CD8-positive, alpha-beta T cell (primary cell): ENCODE measurements at regions of chr17 and their contacts with region 1.

Region 1: GRCh38 chr17:43483674-43484372 is at the start of gene DHX8:
- DNase-seq: peak; percentile 97 to 100 (median 99)
- ATAC-seq: peak; percentile 98
- H3K4me3 ChIP-seq: peak within 1 kb of the TSS; percentile 94 to 99
- H3K4me3 Mint-ChIP-seq: peak within 1 kb of the TSS; percentile 100
- H3K27ac ChIP-seq: peak within 1 kb of the TSS; percentile 87 to 91
- H3K27ac Mint-ChIP-seq: peak within 1 kb of the TSS; percentile 99
- H3K4me1 ChIP-seq: peaks cover 27% of the 10 kb centered on the region
- H3K4me1 Mint-ChIP-seq: peaks cover 37% of the 10 kb centered on the region
- H3K27me3 ChIP-seq: no peaks in the 10 kb centered on the region
- H3K27me3 Mint-ChIP-seq: no peaks in the 10 kb centered on the region
- CTCF ChIP-seq: peak; percentile 100
- total RNA-seq, gene DHX8: 125 to 130 TPM

Region 2: GRCh38 chr17:42744806-42745617 is 738.8 kb before region 1 on chr17 and contains the start of gene EZH1:
- CTCF ChIA-PET with region 1: no interaction called
- POLR2A ChIA-PET with region 1: no interaction called
- intact Hi-C with region 1: loop called in 1 of 2 experiments (anchors 10 kb)
- DNase-seq: peak; percentile 82 to 96 (median 90)
- ATAC-seq: peak; percentile 92
- H3K4me3 ChIP-seq: peak within 1 kb of the TSS; percentile 72 to 73
- H3K4me3 Mint-ChIP-seq: peak within 1 kb of the TSS; percentile 98
- H3K27ac ChIP-seq: peak within 1 kb of the TSS; percentile 62 to 79
- H3K27ac Mint-ChIP-seq: peak within 1 kb of the TSS; percentile 96
- H3K4me1 ChIP-seq: peaks cover 17% of the 10 kb centered on the region
- H3K4me1 Mint-ChIP-seq: peaks cover 31% of the 10 kb centered on the region
- H3K27me3 ChIP-seq: peaks cover 0 to 4% of the 10 kb centered on the region in 2 experiments
- H3K27me3 Mint-ChIP-seq: peaks cover 13% of the 10 kb centered on the region
- CTCF ChIP-seq: no peak
- total RNA-seq, gene EZH1: 59.2 to 63.4 TPM

Region 3: DNA sequence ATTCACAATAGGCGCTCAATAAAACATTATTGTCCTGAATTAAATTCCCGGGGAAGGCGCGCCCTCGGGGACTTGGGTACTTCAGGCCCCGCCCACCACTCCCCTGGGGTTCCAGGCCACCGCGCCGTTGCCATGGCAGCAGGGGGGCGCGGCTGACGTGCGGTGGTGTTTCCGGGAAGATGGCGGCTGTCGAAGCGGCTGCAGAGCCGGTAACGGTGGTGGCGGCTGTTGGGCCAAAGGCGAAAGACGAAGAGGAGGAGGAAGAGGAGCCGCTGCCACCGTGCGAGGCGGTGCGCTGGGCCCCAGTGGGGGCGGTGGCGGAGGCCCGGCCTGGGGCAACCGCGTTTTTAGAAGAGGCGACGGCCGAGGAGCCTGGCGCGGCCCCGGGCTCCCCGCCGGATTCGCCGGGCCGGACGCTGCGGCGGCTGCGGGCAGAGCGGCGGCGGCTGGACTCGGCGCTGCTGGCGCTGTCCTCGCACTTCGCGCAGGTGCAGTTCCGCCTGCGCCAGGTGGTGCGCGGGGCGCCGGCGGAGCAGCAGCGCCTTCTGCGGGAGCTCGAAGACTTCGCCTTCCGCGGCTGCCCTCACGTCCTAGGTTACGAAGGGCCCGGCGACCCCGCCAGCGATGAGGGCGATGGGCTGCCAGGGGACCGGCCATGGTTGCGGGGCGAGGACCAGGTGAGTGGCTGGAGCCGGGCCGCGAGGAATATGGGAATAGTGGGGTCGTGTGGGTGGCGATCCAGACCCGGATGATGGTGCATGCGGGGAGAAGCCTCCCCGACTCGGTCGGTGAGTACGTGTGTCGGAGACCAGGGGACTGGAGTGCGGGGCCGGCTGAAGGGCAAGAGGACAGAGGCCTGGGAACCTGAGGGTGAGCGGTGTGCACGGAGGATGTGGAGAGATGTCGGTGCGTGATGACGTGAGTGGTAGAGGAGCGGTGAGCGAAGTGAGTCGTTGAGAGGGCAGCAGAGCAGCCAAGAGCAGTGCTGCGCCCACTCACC is 503.1 kb before region 1 on chr17 and contains the start of gene RUNDC1:
- CTCF ChIA-PET with region 1: no interaction called
- POLR2A ChIA-PET with region 1: no interaction called
- intact Hi-C with region 1: loop called in 1 of 2 experiments (anchors 5 kb)
- DNase-seq: peak; percentile 77 to 95 (median 91)
- ATAC-seq: peak; percentile 86
- H3K4me3 ChIP-seq: peak within 1 kb of the TSS; percentile 66 to 80
- H3K4me3 Mint-ChIP-seq: peak within 1 kb of the TSS; percentile 97
- H3K27ac ChIP-seq: peak within 1 kb of the TSS; percentile 65 to 67
- H3K27ac Mint-ChIP-seq: peak within 1 kb of the TSS; percentile 97
- H3K4me1 ChIP-seq: peaks cover 20% of the 10 kb centered on the region
- H3K4me1 Mint-ChIP-seq: peaks cover 41% of the 10 kb centered on the region
- H3K27me3 ChIP-seq: no peaks in the 10 kb centered on the region
- H3K27me3 Mint-ChIP-seq: no peaks in the 10 kb centered on the region
- CTCF ChIP-seq: peak; percentile 50
- total RNA-seq, gene RUNDC1: 19.2 to 19.4 TPM

Region 4: GRCh38 chr17:43330876-43331639 is 152.8 kb before region 1 on chr17:
- CTCF ChIA-PET with region 1: no interaction called
- POLR2A ChIA-PET with region 1: no interaction called
- intact Hi-C with region 1: loop called in 1 of 2 experiments (anchors 1 kb)
- DNase-seq: no peak
- ATAC-seq: no peak
- H3K4me3 ChIP-seq: no peak overlapping the region
- H3K4me3 Mint-ChIP-seq: no peak overlapping the region
- H3K27ac ChIP-seq: no peak overlapping the region
- H3K27ac Mint-ChIP-seq: no peak overlapping the region
- H3K4me1 ChIP-seq: peaks cover 7% of the 10 kb centered on the region
- H3K4me1 Mint-ChIP-seq: peaks cover 7% of the 10 kb centered on the region
- H3K27me3 ChIP-seq: no peaks in the 10 kb centered on the region
- H3K27me3 Mint-ChIP-seq: peaks cover 15% of the 10 kb centered on the region
- CTCF ChIP-seq: no peak

Region 5: DNA sequence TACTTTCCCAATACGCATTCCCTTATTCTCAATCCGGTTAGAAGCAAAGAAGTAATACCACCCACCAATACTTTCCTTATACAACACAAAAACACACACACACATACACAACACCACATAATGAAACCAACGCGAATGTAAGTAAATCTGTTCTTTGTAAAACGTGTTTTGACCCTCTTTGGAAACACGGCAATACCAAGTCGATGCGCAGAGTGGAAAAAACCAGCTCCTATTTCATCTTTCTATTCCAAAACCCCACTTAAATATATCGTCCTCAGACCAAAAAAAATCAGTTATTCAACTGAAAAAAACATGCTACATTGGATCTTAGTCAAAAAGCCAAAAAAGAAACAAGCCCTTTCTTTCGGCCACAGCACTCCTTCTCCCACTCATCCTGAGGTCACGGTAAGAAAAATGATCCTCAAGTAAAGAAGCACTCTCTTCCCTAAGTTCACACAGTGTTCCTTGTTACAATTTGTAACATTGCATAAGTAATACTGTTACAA is 116.0 kb before region 1 on chr17:
- CTCF ChIA-PET with region 1: interaction called, 10 read pairs
- POLR2A ChIA-PET with region 1: interaction called, 53 read pairs
- intact Hi-C with region 1: no loop called
- DNase-seq: peak in 5 of 9 experiments; percentile 16 to 86 (median 24)
- ATAC-seq: peak; percentile 57
- H3K4me3 ChIP-seq: peak overlapping the region; percentile 73 to 76
- H3K4me3 Mint-ChIP-seq: peak overlapping the region; percentile 97
- H3K27ac ChIP-seq: peak overlapping the region; percentile 97 to 98
- H3K27ac Mint-ChIP-seq: peak overlapping the region; percentile 100
- H3K4me1 ChIP-seq: peaks cover 20% of the 10 kb centered on the region
- H3K4me1 Mint-ChIP-seq: peaks cover 38% of the 10 kb centered on the region
- H3K27me3 ChIP-seq: no peaks in the 10 kb centered on the region
- H3K27me3 Mint-ChIP-seq: no peaks in the 10 kb centered on the region
- CTCF ChIP-seq: no peak

Region 6: GRCh38 chr17:43393944-43394482 is 89.8 kb before region 1 on chr17:
- CTCF ChIA-PET with region 1: interaction called, 156 read pairs
- POLR2A ChIA-PET with region 1: interaction called, 37 read pairs
- intact Hi-C with region 1: loop called (anchors 1 kb)
- DNase-seq: peak; percentile 78 to 93 (median 88)
- ATAC-seq: peak; percentile 28
- H3K4me3 ChIP-seq: no peak overlapping the region
- H3K4me3 Mint-ChIP-seq: no peak overlapping the region
- H3K27ac ChIP-seq: no peak overlapping the region
- H3K27ac Mint-ChIP-seq: peak overlapping the region; percentile 11
- H3K4me1 ChIP-seq: peaks cover 21% of the 10 kb centered on the region
- H3K4me1 Mint-ChIP-seq: peaks cover 24% of the 10 kb centered on the region
- H3K27me3 ChIP-seq: no peaks in the 10 kb centered on the region
- H3K27me3 Mint-ChIP-seq: no peaks in the 10 kb centered on the region
- CTCF ChIP-seq: peak; percentile 88

Region 7: GRCh38 chr17:43431714-43432523 is 51.9 kb before region 1 on chr17:
- CTCF ChIA-PET with region 1: no interaction called
- POLR2A ChIA-PET with region 1: no interaction called
- intact Hi-C with region 1: no loop called
- DNase-seq: no peak
- ATAC-seq: no peak
- H3K4me3 ChIP-seq: no peak overlapping the region
- H3K4me3 Mint-ChIP-seq: no peak overlapping the region
- H3K27ac ChIP-seq: no peak overlapping the region
- H3K27ac Mint-ChIP-seq: no peak overlapping the region
- H3K4me1 ChIP-seq: no peaks in the 10 kb centered on the region
- H3K4me1 Mint-ChIP-seq: no peaks in the 10 kb centered on the region
- H3K27me3 ChIP-seq: no peaks in the 10 kb centered on the region
- H3K27me3 Mint-ChIP-seq: peaks cover 26% of the 10 kb centered on the region
- CTCF ChIP-seq: no peak

Region 8: DNA sequence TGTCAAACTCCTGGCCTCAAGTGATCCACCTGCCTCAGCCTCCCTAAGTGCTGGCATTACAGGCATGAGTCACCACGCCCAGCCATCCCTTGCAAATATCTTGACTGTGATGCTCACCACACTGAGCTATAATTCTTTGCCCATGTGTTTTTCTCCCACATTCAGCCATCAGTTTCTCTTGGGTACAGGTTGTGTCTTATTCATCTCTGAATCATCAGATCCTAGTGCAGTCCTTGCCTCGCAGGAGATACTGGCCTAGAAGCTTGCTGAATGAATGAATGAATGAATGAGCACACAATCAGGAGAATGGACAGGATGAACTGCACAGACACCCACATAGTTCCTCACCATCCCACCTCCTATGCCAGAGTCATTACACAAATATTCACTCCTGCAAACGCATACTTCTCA is 86.7 kb after region 1 on chr17:
- CTCF ChIA-PET with region 1: no interaction called
- POLR2A ChIA-PET with region 1: no interaction called
- intact Hi-C with region 1: no loop called
- DNase-seq: no peak
- ATAC-seq: no peak
- H3K4me3 ChIP-seq: no peak overlapping the region
- H3K4me3 Mint-ChIP-seq: no peak overlapping the region
- H3K27ac ChIP-seq: no peak overlapping the region
- H3K27ac Mint-ChIP-seq: no peak overlapping the region
- H3K4me1 ChIP-seq: no peaks in the 10 kb centered on the region
- H3K4me1 Mint-ChIP-seq: no peaks in the 10 kb centered on the region
- H3K27me3 ChIP-seq: no peaks in the 10 kb centered on the region
- H3K27me3 Mint-ChIP-seq: no peaks in the 10 kb centered on the region
- CTCF ChIP-seq: no peak

Region 9: GRCh38 chr17:44014437-44015172 is 530.8 kb after region 1 on chr17 and contains the start of gene TMEM101:
- CTCF ChIA-PET with region 1: no interaction called
- POLR2A ChIA-PET with region 1: no interaction called
- intact Hi-C with region 1: loop called in 1 of 2 experiments (anchors 1 kb)
- DNase-seq: peak; percentile 79 to 95 (median 90)
- ATAC-seq: peak; percentile 99
- H3K4me3 ChIP-seq: peak within 1 kb of the TSS; percentile 81 to 91
- H3K4me3 Mint-ChIP-seq: peak within 1 kb of the TSS; percentile 100
- H3K27ac ChIP-seq: peak within 1 kb of the TSS; percentile 51 to 55
- H3K27ac Mint-ChIP-seq: peak within 1 kb of the TSS; percentile 95
- H3K4me1 ChIP-seq: peaks cover 11% of the 10 kb centered on the region
- H3K4me1 Mint-ChIP-seq: peaks cover 10% of the 10 kb centered on the region
- H3K27me3 ChIP-seq: no peaks in the 10 kb centered on the region
- H3K27me3 Mint-ChIP-seq: no peaks in the 10 kb centered on the region
- CTCF ChIP-seq: no peak
- total RNA-seq, gene TMEM101: 8.1 to 8.7 TPM